Mammary epithelial cell (primary cell): ENCODE measurements at regions of chr1 and their contacts with region 1.

Region 1: GRCh38 chr1:229227298-229227919 is 43.5 kb upstream of the RAB4A start:
- DNase-seq: peak; percentile 62
- H3K4me3 ChIP-seq: no peak overlapping the region
- H3K27ac ChIP-seq: no peak overlapping the region
- H3K4me1 ChIP-seq: peaks cover 57% of the 10 kb centered on the region
- H3K27me3 ChIP-seq: no peaks in the 10 kb centered on the region
- CTCF ChIP-seq: peak; percentile 59 to 94

Region 2: DNA sequence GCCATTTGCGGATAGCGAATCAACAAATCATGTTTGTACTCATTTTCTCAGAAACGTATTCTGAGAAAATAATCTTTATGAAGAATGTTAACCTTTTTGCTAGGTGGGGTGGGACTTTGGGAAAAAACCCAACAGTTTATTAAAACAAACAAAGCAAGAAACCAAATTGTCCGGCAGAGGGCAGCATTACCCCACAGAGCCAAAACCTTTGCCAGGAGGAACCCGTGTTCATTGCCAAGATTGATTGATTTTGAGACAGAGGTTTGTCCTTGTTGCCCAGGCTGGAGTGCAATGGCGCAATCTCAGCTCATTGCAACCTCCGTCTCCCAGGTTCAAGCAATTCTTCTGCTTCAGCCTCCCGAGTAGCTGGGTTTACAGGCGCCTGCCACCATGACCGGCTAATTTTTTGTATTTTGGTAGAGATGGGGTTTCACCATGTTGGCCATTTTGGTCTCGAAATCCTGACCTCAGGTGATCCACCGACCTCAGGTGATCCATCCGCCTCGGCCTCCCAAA is 563.0 kb before region 1 on chr1:
- CTCF ChIA-PET with region 1: no interaction called
- dilution Hi-C with region 1: no loop called
- in situ Hi-C with region 1: no loop called
- intact Hi-C with region 1: loop called (anchors 1 kb)
- DNase-seq: peak; percentile 48
- H3K4me3 ChIP-seq: no peak overlapping the region
- H3K27ac ChIP-seq: no peak overlapping the region
- H3K4me1 ChIP-seq: no peaks in the 10 kb centered on the region
- H3K27me3 ChIP-seq: peaks cover 5% of the 10 kb centered on the region
- CTCF ChIP-seq: peak; percentile 63 to 80

Region 3: GRCh38 chr1:228734881-228735801 is 492.3 kb before region 1 on chr1 and contains the start of gene RHOU:
- CTCF ChIA-PET with region 1: no interaction called
- dilution Hi-C with region 1: no loop called
- in situ Hi-C with region 1: no loop called
- intact Hi-C with region 1: loop called (anchors 1 kb)
- DNase-seq: peak; percentile 7
- H3K4me3 ChIP-seq: peak within 1 kb of the TSS in 2 of 3 experiments; percentile 52 to 53
- H3K27ac ChIP-seq: no peak within 1 kb of the TSS
- H3K4me1 ChIP-seq: peaks cover 8% of the 10 kb centered on the region
- H3K27me3 ChIP-seq: peaks cover 28% of the 10 kb centered on the region
- CTCF ChIP-seq: peak in 1 of 2 donors; percentile 19
- total RNA-seq, gene RHOU: 0.14 to 0.67 TPM

Region 4: GRCh38 chr1:229024528-229025130 is 202.8 kb before region 1 on chr1:
- CTCF ChIA-PET with region 1: no interaction called
- dilution Hi-C with region 1: no loop called
- in situ Hi-C with region 1: no loop called
- intact Hi-C with region 1: loop called (anchors 10 kb)
- DNase-seq: peak; percentile 73
- H3K4me3 ChIP-seq: no peak overlapping the region
- H3K27ac ChIP-seq: no peak overlapping the region
- H3K4me1 ChIP-seq: peaks cover 7% of the 10 kb centered on the region
- H3K27me3 ChIP-seq: no peaks in the 10 kb centered on the region
- CTCF ChIP-seq: peak in 1 of 2 donors; percentile 12

Region 5: GRCh38 chr1:229270547-229271447 is 43.4 kb after region 1 on chr1 and contains the start of gene RAB4A:
- CTCF ChIA-PET with region 1: no interaction called
- dilution Hi-C with region 1: loop called (anchors 5 kb)
- in situ Hi-C with region 1: no loop called
- intact Hi-C with region 1: no loop called
- DNase-seq: peak; percentile 81
- H3K4me3 ChIP-seq: peak within 1 kb of the TSS; percentile 63 to 78 (median 77)
- H3K27ac ChIP-seq: peak within 1 kb of the TSS; percentile 76
- H3K4me1 ChIP-seq: peaks cover 40% of the 10 kb centered on the region
- H3K27me3 ChIP-seq: no peaks in the 10 kb centered on the region
- CTCF ChIP-seq: no peak
- total RNA-seq, gene RAB4A: 46.5 to 59.2 TPM